ENCODE measurements at regions of chr1 and their contacts with region 1.

Region 1: DNA sequence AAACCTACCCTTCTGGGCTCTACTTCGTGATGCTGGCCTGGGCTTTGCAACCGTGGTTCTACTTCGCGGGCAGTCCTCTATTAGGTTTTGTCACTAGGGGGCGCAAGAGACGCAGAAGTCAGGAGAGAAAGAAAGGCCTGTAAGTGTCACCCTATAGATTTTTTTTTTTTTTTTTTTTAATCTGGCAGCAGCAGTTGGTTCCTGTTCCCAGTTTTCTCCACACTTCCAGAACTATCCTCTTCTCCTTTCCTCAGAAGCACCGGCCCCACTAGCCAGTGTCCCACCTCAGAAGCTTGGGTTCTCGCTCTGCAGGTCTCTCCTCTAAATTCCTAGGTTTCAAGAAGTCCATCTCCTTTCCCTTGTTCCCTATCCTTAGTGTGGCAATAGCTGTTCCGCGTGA is 9.1 kb upstream of the LCE2D start:
- DNase-seq: peak; percentile 32
- ATAC-seq: peak; percentile 94
- H3K4me3 ChIP-seq: no peak overlapping the region
- H3K27ac ChIP-seq: no peak overlapping the region
- H3K4me1 ChIP-seq: no peaks in the 10 kb centered on the region
- H3K27me3 ChIP-seq: peaks cover 44% of the 10 kb centered on the region
- CTCF ChIP-seq: peak; percentile 59 to 88 (median 81)
- POLR2A ChIP-seq: no peak
- RAD21 ChIP-seq: peak; percentile 70

Region 2: GRCh38 chr1:152912900-152913299 is 258.8 kb after region 1 on chr1:
- CTCF ChIA-PET with region 1: no interaction called
- POLR2A ChIA-PET with region 1: no interaction called
- RAD21 ChIA-PET with region 1: no interaction called
- intact Hi-C with region 1: no loop called
- DNase-seq: no peak
- ATAC-seq: no peak
- H3K4me3 ChIP-seq: no peak overlapping the region
- H3K27ac ChIP-seq: no peak overlapping the region
- H3K4me1 ChIP-seq: peaks cover 0 to 6% of the 10 kb centered on the region in 2 experiments; a peak in 1 of 4 replicates
- H3K27me3 ChIP-seq: peaks cover 35% of the 10 kb centered on the region
- CTCF ChIP-seq: no peak
- POLR2A ChIP-seq: no peak
- RAD21 ChIP-seq: no peak

Region 3: DNA sequence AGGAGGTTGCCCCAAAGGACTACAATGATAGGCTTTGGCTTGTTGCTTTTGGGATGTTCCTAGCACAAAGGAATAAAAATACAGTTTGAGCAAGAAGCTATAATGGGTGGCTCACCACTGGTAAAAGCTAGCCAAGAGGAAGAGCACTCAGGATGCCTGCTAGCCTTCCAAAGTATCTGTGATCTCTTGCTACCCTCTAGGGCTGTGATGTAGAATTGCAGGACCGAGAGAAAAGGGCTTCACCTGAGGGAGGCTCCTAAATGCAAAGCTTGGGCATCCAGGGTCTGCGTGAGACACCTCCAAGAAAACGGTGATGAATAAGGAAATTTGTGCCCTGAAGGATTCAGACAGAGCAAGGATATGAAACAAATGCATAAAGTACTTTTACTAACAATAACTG is 272.0 kb after region 1 on chr1:
- CTCF ChIA-PET with region 1: interaction called, 11 read pairs
- POLR2A ChIA-PET with region 1: no interaction called
- RAD21 ChIA-PET with region 1: no interaction called
- intact Hi-C with region 1: loop called (anchors 5 kb)
- DNase-seq: peak; percentile 24
- ATAC-seq: peak; percentile 83
- H3K4me3 ChIP-seq: no peak overlapping the region
- H3K27ac ChIP-seq: no peak overlapping the region
- H3K4me1 ChIP-seq: no peaks in the 10 kb centered on the region
- H3K27me3 ChIP-seq: peaks cover 19% of the 10 kb centered on the region
- CTCF ChIP-seq: peak; percentile 53 to 64 (median 62); a peak in 4 of 6 replicates
- POLR2A ChIP-seq: no peak
- RAD21 ChIP-seq: peak; percentile 76

Region 4: DNA sequence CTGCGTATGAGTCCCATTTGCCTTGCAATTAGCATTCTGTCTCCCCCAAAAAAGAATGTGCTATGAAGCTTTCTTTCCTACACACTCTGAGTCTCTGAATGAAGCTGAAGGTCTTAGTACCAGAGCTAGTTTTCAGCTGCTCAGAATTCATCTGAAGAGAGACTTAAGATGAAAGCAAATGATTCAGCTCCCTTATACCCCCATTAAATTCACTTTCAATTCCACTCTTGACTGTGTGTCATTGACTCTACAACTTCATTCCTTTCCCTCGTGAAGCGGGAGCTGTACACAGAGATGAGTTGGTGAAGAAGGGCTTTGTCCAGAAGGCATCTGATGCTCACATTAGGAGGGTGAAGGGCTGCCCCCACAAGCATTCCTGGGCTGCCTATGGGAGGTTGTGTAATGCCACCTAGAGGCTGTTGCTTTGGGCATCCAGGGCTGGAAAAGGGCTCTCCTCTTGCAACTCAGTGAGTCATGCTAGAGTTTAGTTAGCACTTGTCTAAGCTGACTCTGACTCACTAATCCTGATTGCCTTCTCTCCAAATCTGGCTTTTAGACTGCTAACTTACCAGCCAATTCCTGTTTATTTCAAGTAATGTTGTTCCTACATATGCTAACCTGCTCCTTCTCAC is 378.7 kb after region 1 on chr1:
- CTCF ChIA-PET with region 1: no interaction called
- POLR2A ChIA-PET with region 1: no interaction called
- RAD21 ChIA-PET with region 1: no interaction called
- intact Hi-C with region 1: loop called (anchors 5 kb)
- DNase-seq: peak; percentile 36
- ATAC-seq: peak; percentile 98
- H3K4me3 ChIP-seq: no peak overlapping the region
- H3K27ac ChIP-seq: no peak overlapping the region
- H3K4me1 ChIP-seq: peaks cover 0 to 6% of the 10 kb centered on the region in 2 experiments; a peak in 1 of 4 replicates
- H3K27me3 ChIP-seq: peaks cover 7% of the 10 kb centered on the region
- CTCF ChIP-seq: peak; percentile 37 to 56 (median 53); a peak in 5 of 6 replicates
- POLR2A ChIP-seq: no peak
- RAD21 ChIP-seq: peak; percentile 65

Region 5: GRCh38 chr1:153220606-153221303 is 566.6 kb after region 1 on chr1:
- CTCF ChIA-PET with region 1: interaction called, 3 read pairs
- POLR2A ChIA-PET with region 1: no interaction called
- RAD21 ChIA-PET with region 1: no interaction called
- intact Hi-C with region 1: loop called (anchors 2 kb)
- DNase-seq: no peak
- ATAC-seq: no peak
- H3K4me3 ChIP-seq: no peak overlapping the region
- H3K27ac ChIP-seq: no peak overlapping the region
- H3K4me1 ChIP-seq: no peaks in the 10 kb centered on the region
- H3K27me3 ChIP-seq: peaks cover 26% of the 10 kb centered on the region
- CTCF ChIP-seq: no peak
- POLR2A ChIP-seq: no peak
- RAD21 ChIP-seq: no peak

Region 6: GRCh38 chr1:153277817-153278216 is 623.7 kb after region 1 on chr1:
- CTCF ChIA-PET with region 1: no interaction called
- POLR2A ChIA-PET with region 1: no interaction called
- RAD21 ChIA-PET with region 1: no interaction called
- intact Hi-C with region 1: loop called (anchors 2 kb)
- DNase-seq: peak; percentile 66
- ATAC-seq: peak; percentile 100
- H3K4me3 ChIP-seq: no peak overlapping the region
- H3K27ac ChIP-seq: no peak overlapping the region
- H3K4me1 ChIP-seq: no peaks in the 10 kb centered on the region
- H3K27me3 ChIP-seq: peaks cover 20% of the 10 kb centered on the region; the same call in 1 of the 2 replicates
- CTCF ChIP-seq: peak; percentile 58 to 93 (median 89); a peak in 5 of 6 replicates
- POLR2A ChIP-seq: no peak
- RAD21 ChIP-seq: peak; percentile 71